Adrenal gland (tissue), 19 donors: ENCODE measurements at regions of chr2 and their contacts with region 1.

Region 1: DNA sequence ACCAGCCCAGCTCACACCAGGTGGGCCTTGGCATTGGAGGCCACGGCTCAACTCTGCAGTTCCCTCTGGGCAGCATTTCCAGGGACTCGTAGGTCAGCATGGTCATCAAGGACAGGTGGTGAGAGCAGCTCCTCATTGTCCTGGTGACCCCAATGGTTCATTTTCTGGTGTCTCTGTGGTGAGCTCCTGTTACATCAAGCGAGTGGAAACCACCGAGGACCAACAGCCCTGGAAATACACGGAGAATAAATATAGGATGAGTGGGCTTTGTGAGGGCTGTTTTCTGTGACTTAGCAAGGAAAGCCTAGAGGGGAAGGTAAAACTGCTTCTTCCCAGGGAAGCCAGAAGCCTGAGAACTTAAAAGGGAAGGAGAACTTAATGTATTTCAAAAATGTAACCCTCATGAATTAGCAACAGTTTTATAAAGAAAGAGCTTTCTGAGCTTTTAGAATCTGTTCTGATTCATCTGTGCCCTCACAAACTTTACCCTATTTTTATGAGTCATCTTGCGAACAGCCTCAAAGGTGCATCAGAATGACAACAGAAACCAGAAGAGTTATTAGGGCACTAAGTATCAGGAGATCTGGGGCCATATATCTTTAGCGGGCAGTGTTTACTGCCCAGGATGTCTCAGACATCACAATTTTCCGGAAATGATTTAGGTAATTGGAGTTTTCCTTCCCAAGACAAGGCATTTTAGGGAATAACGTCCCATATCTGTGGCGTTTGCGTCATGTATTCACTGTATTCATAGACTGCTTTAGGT is 18.7 kb downstream of the C2orf92 start:
- DNase-seq: no peak
- H3K4me3 ChIP-seq: no peak overlapping the region
- H3K27ac ChIP-seq: no peak overlapping the region
- H3K4me1 ChIP-seq: no peaks in the 10 kb centered on the region
- H3K27me3 ChIP-seq: no peaks in the 10 kb centered on the region
- CTCF ChIP-seq: no peak
- POLR2A ChIP-seq: no peak

Region 2: GRCh38 chr2:96065381-96065930 is 1622.8 kb before region 1 on chr2:
- intact Hi-C with region 1: loop called in 1 of 2 experiments (anchors 10 kb)
- DNase-seq: no peak
- H3K4me3 ChIP-seq: no peak overlapping the region
- H3K27ac ChIP-seq: no peak overlapping the region
- H3K4me1 ChIP-seq: no peaks in the 10 kb centered on the region
- H3K27me3 ChIP-seq: peaks cover 5% of the 10 kb centered on the region
- CTCF ChIP-seq: no peak
- POLR2A ChIP-seq: no peak